Activated CD4-positive, alpha-beta memory T cell treated with anti-CD3 and anti-CD28 coated beads for 36 hours (primary cell): ENCODE measurements at regions of chr2 and their contacts with region 1.

Region 1: DNA sequence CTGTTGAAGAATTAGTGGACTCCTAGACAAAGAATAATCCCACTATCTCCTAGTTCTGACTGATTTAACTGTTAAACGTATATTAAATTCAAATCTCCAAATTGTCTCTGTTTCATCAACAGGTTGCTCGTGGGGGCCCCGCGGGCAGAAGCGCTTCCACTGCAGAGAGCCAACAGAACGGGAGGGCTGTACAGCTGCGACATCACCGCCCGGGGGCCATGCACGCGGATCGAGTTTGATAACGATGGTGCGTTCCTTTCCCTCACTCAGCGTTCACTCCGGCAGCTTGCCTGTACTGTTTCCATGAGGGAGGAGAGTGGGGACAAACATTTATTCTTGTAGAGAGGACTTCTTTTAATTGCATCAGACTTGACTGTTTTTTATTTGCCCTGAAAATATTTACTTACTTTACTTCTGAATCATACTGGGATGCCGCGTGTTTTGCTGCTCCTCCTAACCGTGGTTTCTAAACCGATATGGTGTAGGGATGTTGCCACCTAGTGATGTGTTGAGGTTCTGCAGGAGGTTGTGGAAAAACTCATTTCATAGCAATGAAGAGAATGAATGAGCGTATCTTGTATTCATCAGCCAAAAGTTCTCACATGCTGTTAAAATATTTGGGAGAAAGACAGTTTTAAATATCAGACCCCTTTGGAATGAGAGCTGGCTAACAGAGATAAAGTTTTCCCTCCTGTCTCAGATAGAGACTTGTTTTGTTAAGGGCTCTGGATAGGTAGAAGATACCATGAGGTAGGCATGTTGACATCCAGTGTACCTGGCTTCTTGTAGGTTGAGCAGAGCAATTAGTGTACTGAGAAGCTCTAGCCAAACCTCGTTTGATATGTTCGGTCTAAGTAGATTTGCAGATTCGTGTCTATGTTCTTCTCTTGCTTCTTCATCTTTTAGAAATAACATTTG is 38.3 kb downstream of the ITGA6 start:
- DNase-seq: peak; percentile 80
- H3K4me3 Mint-ChIP-seq: no peak overlapping the region
- H3K27ac Mint-ChIP-seq: peak overlapping the region; percentile 18
- H3K4me1 Mint-ChIP-seq: peaks cover 56% of the 10 kb centered on the region
- H3K27me3 Mint-ChIP-seq: no peaks in the 10 kb centered on the region

Region 2: GRCh38 chr2:171598713-171599319 is 866.9 kb before region 1 on chr2:
- CTCF ChIA-PET with region 1: interaction called, 3 read pairs
- POLR2A ChIA-PET with region 1: no interaction called
- intact Hi-C with region 1: loop called (anchors 5 kb)
- DNase-seq: peak; percentile 47
- H3K4me3 Mint-ChIP-seq: no peak overlapping the region
- H3K27ac Mint-ChIP-seq: no peak overlapping the region
- H3K4me1 Mint-ChIP-seq: peaks cover 2% of the 10 kb centered on the region
- H3K27me3 Mint-ChIP-seq: peaks cover 4% of the 10 kb centered on the region

Region 3: GRCh38 chr2:171991027-171991426 is 474.6 kb before region 1 on chr2:
- CTCF ChIA-PET with region 1: no interaction called
- POLR2A ChIA-PET with region 1: no interaction called
- intact Hi-C with region 1: no loop called
- DNase-seq: no peak
- H3K4me3 Mint-ChIP-seq: no peak overlapping the region
- H3K27ac Mint-ChIP-seq: peak overlapping the region; percentile 43
- H3K4me1 Mint-ChIP-seq: peaks cover 6% of the 10 kb centered on the region
- H3K27me3 Mint-ChIP-seq: peaks cover 6% of the 10 kb centered on the region

Region 4: DNA sequence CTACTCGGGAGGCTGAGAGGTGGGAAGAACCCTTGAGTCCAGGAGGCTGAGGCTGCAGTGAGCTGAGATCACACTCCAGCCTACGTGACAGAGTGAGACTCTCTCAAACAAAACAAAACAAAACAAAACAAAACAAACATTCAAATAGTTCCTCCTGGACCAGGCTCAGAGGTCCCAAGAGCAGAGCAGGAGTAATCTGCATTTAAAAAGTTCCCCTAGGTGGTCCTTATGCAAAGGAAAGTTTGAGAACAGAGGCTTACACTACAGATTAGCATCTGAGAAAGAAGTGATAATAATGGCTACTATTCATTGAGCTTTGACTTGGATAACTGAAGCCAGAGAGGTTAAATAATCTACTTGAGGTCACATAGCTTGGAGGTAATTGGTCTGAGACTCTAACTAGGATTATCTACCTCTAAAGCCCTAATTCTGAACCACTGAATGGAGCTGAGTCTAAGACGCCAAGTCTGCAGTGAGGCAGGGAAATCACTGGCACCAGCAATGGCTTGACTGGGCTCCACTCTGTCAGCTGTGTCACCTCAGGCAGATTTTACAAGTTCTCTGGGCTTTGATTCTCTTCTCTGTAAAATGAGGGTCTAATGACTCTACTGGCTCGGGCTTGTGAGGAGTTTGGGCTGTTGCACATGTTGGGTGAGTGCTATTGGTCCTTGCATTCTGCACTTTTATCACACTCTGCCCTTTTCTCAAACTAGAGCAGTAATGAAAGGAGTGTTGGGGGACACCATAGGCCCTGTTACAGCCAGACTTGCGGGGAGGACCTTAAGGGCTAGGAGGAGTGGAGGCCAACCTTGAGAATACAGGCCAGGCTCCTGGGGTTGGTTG is 333.7 kb before region 1 on chr2:
- CTCF ChIA-PET with region 1: interaction called, 19 read pairs
- POLR2A ChIA-PET with region 1: no interaction called
- intact Hi-C with region 1: no loop called
- DNase-seq: no peak
- H3K4me3 Mint-ChIP-seq: no peak overlapping the region
- H3K27ac Mint-ChIP-seq: no peak overlapping the region
- H3K4me1 Mint-ChIP-seq: no peaks in the 10 kb centered on the region
- H3K27me3 Mint-ChIP-seq: peaks cover 8% of the 10 kb centered on the region

Region 5: DNA sequence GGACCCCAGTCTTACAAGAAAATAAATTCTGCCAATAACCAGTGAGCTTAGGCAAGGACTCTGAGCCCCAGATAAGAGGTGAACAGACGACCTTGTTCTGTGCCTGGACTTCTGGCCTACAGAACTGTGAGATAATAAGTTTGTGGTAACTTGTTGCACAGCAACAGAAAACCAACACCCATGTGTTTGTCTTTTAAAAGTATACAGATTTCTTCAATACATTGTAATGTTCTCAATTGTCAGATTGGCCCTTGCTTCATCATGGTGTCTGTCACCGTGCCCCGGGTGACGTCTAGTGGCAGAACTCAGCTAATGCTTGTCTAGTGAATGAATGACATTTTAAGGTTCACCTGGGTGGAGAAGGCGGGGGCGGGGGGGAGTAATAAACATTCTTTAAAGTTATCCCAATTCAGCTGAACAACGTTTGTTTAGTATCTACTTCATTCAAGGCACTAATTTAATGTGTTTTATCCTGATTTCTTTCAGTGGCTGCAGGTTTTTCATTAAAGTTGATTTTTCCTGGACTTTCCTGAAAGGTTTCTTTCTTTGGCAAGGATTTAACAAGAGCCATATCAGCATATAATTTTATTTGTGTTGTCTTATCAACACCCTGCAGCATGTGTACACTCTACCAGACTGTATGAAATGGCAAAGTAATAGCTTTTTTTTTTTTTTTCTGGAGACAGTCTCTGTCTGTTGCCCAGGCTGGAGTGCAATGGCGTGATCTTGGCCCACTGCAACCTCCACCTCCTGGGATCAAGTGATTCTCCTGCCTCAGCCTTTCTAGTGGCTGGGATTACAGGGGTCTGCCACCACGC is 239.2 kb before region 1 on chr2:
- CTCF ChIA-PET with region 1: interaction called, 15 read pairs
- POLR2A ChIA-PET with region 1: no interaction called
- intact Hi-C with region 1: no loop called
- DNase-seq: peak; percentile 50
- H3K4me3 Mint-ChIP-seq: no peak overlapping the region
- H3K27ac Mint-ChIP-seq: no peak overlapping the region
- H3K4me1 Mint-ChIP-seq: peaks cover 38% of the 10 kb centered on the region
- H3K27me3 Mint-ChIP-seq: no peaks in the 10 kb centered on the region

Region 6: DNA sequence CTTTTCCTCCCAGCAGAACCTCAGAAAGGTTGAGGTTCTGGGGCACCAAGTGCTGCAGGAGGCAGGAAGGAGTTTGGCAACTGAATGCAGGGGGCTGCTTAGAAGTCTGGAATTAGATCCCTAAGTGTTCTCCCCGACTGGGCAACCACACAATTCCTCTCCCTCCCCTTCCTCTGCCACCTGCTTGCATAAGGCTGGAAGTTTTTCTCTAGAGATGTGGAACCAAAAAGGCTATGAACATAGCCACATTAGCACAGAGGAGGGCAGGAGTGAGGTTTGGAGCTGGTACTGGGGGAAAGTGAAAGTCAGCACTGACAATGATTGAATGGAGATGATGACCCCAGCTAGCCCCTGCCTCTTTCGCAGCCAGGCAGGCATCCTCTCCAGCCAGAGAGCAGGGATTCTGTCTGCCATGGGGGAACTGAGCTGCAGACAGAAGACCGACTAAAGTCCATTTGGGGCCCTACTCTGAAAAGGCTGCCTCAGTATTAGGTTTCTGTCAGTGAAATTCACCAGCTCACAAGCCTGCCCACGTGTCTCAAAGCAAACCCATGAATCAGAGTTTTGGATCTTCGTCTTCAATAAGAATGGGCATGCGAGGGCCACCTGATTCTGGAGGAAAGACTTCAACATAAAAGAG is 126.2 kb before region 1 on chr2:
- CTCF ChIA-PET with region 1: interaction called, 13 read pairs
- POLR2A ChIA-PET with region 1: no interaction called
- intact Hi-C with region 1: loop called (anchors 10 kb)
- DNase-seq: no peak
- H3K4me3 Mint-ChIP-seq: peak overlapping the region; percentile 2
- H3K27ac Mint-ChIP-seq: no peak overlapping the region
- H3K4me1 Mint-ChIP-seq: peaks cover 17% of the 10 kb centered on the region
- H3K27me3 Mint-ChIP-seq: no peaks in the 10 kb centered on the region

Region 7: GRCh38 chr2:172484253-172484652 is 18.6 kb after region 1 on chr2:
- CTCF ChIA-PET with region 1: interaction called, 17 read pairs
- POLR2A ChIA-PET with region 1: no interaction called
- intact Hi-C with region 1: no loop called
- DNase-seq: no peak
- H3K4me3 Mint-ChIP-seq: no peak overlapping the region
- H3K27ac Mint-ChIP-seq: no peak overlapping the region
- H3K4me1 Mint-ChIP-seq: peaks cover 26% of the 10 kb centered on the region
- H3K27me3 Mint-ChIP-seq: no peaks in the 10 kb centered on the region